ENCODE measurements at regions of chr12 and their contacts with region 1.

Region 1: DNA sequence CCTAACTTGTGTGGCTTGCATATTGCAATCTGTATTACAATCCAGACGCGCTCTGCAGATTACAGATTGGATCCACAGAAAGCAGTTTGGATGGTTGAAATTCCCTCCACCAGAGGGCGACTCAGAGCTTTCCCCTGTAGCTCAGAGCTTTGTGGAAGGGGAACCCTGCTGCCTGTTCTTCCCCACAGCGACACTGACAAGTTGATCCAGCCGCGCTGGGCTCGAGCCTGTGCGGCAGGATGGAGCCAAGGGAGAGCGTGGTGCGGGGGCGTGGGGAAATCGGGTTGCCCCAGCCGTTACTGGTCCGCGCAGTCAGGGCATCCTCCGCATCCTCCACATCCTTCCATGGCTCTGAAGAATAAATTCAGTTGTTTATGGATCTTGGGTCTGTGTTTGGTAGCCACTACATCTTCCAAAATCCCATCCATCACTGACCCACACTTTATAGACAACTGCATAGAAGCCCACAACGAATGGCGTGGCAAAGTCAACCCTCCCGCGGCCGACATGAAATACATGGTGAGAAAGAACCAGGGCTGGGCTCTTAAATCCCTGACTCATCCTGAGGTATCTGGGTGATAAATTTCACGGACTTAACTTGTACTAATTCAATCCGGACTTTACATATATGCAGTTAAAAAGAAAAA is at the start of gene GLIPR1L1:
- DNase-seq: peak; percentile 46
- H3K4me3 ChIP-seq: peak within 1 kb of the TSS; percentile 50
- H3K27me3 ChIP-seq: no peaks in the 10 kb centered on the region
- CTCF ChIP-seq: peak; percentile 82
- polyA plus RNA-seq, gene GLIPR1L1: not detected in 2 replicates

Region 2: GRCh38 chr12:75505706-75506312 is 171.3 kb after region 1 on chr12:
- CTCF ChIA-PET with region 1: interaction called, 11 read pairs
- POLR2A ChIA-PET with region 1: no interaction called
- DNase-seq: no peak
- H3K4me3 ChIP-seq: no peak overlapping the region
- H3K27me3 ChIP-seq: no peaks in the 10 kb centered on the region
- CTCF ChIP-seq: peak; percentile 67